ENCODE measurements at regions of chr6 and their contacts with region 1.

Region 1: DNA sequence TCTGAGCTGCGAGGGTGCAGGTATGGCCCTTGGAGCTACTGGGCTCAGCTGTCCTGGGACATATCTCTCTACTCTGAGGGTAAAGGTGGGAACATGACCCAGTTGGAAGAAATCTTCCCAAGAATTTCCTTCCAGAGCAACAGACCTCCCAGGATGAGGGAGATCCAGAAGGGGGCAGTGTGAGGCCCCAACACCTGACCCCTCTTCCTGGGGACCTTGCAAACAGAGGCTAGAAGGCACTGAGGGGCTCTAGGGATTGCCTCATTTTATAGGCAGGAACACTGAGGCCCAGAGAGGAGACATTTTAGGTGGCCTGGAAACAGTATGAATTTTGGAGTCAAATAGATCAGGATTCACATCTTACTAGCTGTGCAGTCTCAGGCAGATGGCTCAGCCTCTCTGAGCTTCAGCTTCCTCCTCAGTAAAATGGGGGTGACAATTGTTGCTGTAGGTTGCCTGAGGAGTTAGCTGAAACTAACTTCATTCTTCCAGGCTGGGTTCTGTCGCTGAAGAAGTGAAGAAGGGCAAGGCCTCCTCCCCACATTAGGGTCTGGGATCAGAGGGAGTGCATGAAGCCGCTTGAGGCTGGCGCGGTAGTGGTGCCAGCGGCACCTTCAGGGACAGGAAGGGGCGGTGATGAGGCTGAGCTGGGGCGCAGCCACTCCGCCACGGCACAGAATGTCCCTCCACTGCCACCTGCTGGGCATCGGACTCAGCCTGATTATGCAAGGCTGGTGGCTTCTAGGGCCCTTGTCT is 11.4 kb downstream of the KCNK17 start:
- DNase-seq: peak; percentile 92
- CTCF ChIP-seq: peak; percentile 94

Region 2: DNA sequence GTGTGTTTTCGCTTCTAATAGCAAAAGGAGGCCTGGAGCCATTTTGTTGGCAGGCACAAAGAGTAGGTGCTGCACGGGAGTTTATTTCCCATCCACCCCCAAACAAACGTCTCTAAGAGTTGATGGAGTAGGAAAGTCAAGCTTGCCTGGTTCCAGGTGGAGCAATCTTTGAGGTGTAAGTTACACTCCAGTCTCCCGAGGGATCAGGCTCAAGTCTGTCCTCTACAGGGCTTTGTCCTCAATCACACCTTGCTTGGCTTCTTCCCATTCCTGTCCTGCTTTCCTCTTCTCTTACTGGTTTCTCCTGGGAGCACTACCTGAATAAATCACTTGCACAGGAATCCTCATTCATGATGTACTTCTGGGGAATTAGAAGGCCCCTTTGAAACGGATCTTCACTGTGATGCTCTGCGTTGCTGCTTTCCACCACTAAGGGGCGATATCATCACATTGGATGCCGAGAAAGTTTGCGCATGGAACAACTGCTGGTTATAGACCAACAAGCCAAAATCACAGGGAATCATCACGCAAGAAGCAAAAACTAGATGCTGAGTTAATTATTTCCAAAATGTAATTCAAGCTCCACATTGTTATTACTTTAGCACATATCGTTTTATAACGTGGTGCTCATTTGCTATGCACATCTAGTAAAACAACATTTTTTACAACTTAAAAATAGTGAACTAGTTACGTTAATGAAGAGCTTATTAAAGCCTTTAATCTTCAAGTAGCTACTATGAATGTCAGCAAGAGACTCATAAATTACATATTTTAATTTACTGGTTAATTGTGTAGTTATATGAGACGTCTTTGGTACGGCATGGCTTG is 430.9 kb before region 1 on chr6:
- in situ Hi-C with region 1: loop called (anchors 25 kb)
- DNase-seq: peak; percentile 51
- CTCF ChIP-seq: peak; percentile 91

Region 3: DNA sequence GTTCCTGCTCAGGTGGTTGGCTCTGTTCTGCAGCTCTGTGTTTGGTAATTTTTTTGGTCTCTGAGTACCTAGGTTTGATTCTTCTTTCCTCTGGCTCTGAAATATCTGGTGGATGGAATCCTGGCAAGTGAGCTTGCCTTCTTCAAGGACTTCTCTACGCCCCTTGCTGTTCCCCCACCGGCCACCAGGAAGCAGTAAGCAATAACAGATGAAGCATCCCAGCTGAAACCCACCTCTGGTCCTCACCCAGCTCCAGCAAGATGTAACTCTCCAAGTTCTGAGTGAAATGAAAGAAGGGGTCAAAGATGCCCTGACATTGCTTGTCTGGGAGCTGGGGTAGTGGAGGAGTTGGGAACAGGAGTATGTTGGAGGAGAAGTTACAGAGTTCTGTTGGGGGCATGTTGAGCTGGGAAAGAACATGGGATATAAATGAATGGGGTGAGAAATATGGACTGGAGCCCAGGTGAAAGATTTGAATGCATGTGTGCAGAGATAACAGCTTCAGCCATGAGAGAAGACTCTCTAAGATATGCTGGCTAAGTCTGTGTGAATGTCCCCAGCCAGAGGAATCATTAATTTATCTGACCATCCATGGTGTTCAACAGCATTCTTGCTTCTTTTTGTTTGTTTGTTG is 305.6 kb before region 1 on chr6:
- in situ Hi-C with region 1: loop called (anchors 25 kb)
- DNase-seq: peak; percentile 17
- CTCF ChIP-seq: peak; percentile 59

Region 4: DNA sequence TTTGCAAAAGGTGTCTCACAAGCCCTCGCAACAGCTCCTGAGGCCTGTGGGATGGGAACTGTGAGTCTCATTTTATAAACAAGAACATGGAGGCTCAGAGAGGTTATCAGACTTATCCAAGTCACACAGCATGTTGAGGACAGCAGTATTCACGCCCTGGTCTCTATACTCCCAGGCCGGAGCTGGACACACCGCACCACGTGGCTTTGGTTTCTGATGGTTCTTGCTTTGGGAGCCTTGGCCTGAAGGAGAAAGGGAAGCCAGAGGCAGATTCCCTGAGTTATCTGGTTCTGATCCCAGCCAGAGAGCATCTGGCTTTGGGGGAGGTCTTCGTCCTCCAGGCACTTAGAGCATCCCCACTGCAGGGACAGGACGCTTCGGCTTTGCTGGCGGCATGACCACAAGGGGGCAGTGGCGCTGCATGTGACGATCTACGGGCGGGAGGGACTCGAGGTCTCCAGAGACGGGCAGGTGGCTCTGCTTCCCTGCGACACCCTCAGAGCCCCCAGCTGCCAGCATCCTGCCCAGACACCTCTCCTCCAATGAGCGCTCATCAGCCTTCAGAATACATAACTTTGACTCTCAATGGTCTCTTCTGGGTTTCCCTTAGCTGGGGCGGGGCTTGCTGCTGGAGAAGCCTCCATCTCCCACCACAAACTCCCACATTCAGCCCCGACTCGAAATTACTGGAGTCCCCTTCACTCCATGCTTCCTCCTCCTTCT is 136.5 kb before region 1 on chr6:
- in situ Hi-C with region 1: loop called (anchors 5 kb)
- DNase-seq: peak; percentile 84
- CTCF ChIP-seq: peak; percentile 99

Measured in GM13977 (cell line).